CD8-positive, alpha-beta T cell (primary cell): ENCODE measurements at regions of chr7 and their contacts with region 1.

Region 1: GRCh38 chr7:24245362-24245761 is 38.6 kb upstream of the NPY start:
- DNase-seq: no peak
- ATAC-seq: no peak
- H3K4me3 ChIP-seq: no peak overlapping the region
- H3K4me3 Mint-ChIP-seq: no peak overlapping the region
- H3K27ac ChIP-seq: no peak overlapping the region
- H3K27ac Mint-ChIP-seq: no peak overlapping the region
- H3K4me1 ChIP-seq: no peaks in the 10 kb centered on the region
- H3K4me1 Mint-ChIP-seq: no peaks in the 10 kb centered on the region
- H3K27me3 ChIP-seq: peaks cover 0 to 2% of the 10 kb centered on the region in 2 experiments
- H3K27me3 Mint-ChIP-seq: peaks cover 9% of the 10 kb centered on the region
- CTCF ChIP-seq: no peak

Region 2: DNA sequence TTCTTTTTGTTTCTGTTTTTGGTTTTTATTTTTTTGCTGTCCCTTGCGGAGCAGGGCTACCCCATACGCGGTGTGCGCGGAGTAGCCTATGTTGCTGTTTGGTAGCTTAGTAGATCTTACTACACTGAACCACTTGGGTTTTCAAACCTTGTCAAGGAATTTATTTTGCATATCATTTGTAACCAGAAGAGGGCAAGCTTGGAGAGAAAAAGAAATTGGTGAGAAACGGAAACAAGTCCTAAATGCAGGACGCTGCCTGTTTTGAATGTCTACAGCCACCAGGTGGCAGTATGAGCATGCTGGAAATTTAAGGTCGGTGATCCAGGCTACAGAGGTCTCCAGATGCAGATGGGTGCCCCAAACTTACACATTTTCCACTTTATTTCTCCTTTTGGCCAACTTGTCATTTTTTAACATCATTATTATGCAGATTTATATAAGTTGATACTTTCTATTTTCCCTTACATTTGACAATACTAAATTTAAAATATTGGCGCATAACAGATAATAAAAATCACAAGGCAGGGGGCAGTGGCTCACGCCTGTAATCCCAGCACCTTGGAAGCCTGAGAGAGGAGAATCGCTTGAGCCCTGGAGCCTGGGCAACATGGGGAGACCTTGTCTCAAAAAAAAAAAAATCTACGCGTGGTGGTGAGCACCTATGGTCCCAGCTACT is 698.3 kb before region 1 on chr7:
- CTCF ChIA-PET with region 1: no interaction called
- POLR2A ChIA-PET with region 1: no interaction called
- intact Hi-C with region 1: no loop called
- DNase-seq: peak; percentile 59 to 92 (median 75)
- ATAC-seq: peak; percentile 95
- H3K4me3 ChIP-seq: no peak overlapping the region
- H3K4me3 Mint-ChIP-seq: no peak overlapping the region
- H3K27ac ChIP-seq: no peak overlapping the region
- H3K27ac Mint-ChIP-seq: no peak overlapping the region
- H3K4me1 ChIP-seq: no peaks in the 10 kb centered on the region
- H3K4me1 Mint-ChIP-seq: peaks cover 9% of the 10 kb centered on the region
- H3K27me3 ChIP-seq: no peaks in the 10 kb centered on the region
- H3K27me3 Mint-ChIP-seq: no peaks in the 10 kb centered on the region
- CTCF ChIP-seq: peak; percentile 97

Region 3: GRCh38 chr7:23863209-23863798 is 382.1 kb before region 1 on chr7:
- CTCF ChIA-PET with region 1: no interaction called
- POLR2A ChIA-PET with region 1: no interaction called
- intact Hi-C with region 1: loop called in 1 of 2 experiments (anchors 5 kb)
- DNase-seq: peak in 2 of 9 experiments; percentile 41 to 51
- ATAC-seq: no peak
- H3K4me3 ChIP-seq: no peak overlapping the region
- H3K4me3 Mint-ChIP-seq: no peak overlapping the region
- H3K27ac ChIP-seq: no peak overlapping the region
- H3K27ac Mint-ChIP-seq: no peak overlapping the region
- H3K4me1 ChIP-seq: no peaks in the 10 kb centered on the region
- H3K4me1 Mint-ChIP-seq: no peaks in the 10 kb centered on the region
- H3K27me3 ChIP-seq: no peaks in the 10 kb centered on the region
- H3K27me3 Mint-ChIP-seq: peaks cover 2% of the 10 kb centered on the region
- CTCF ChIP-seq: peak; percentile 28

Region 4: GRCh38 chr7:25456467-25457171 is 1211.3 kb after region 1 on chr7:
- CTCF ChIA-PET with region 1: no interaction called
- POLR2A ChIA-PET with region 1: no interaction called
- intact Hi-C with region 1: no loop called
- DNase-seq: no peak
- ATAC-seq: no peak
- H3K4me3 ChIP-seq: no peak overlapping the region
- H3K4me3 Mint-ChIP-seq: no peak overlapping the region
- H3K27ac ChIP-seq: no peak overlapping the region
- H3K27ac Mint-ChIP-seq: no peak overlapping the region
- H3K4me1 ChIP-seq: no peaks in the 10 kb centered on the region
- H3K4me1 Mint-ChIP-seq: no peaks in the 10 kb centered on the region
- H3K27me3 ChIP-seq: peaks cover 0 to 2% of the 10 kb centered on the region in 2 experiments
- H3K27me3 Mint-ChIP-seq: peaks cover 4% of the 10 kb centered on the region
- CTCF ChIP-seq: no peak